Heart right ventricle (tissue), 16 donors: ENCODE measurements at regions of chrX and their contacts with region 1.

Region 1: GRCh38 chrX:106397801-106398538 is 213.8 kb upstream of the RADX start:
- DNase-seq: no peak
- ATAC-seq: no peak
- H3K4me3 ChIP-seq: no peak overlapping the region
- H3K27ac ChIP-seq: no peak overlapping the region
- H3K4me1 ChIP-seq: no peaks in the 10 kb centered on the region
- H3K27me3 ChIP-seq: peaks cover 0 to 18% (median 0%) of the 10 kb centered on the region in 7 donors
- CTCF ChIP-seq: peak in 6 of 9 donors; percentile 13 to 36 (median 18)

Region 2: GRCh38 chrX:105975382-105975781 is 422.6 kb before region 1 on chrX:
- intact Hi-C with region 1: loop called in 2 of 10 experiments (anchors 10 kb)
- DNase-seq: no peak
- ATAC-seq: no peak
- H3K4me3 ChIP-seq: no peak overlapping the region
- H3K27ac ChIP-seq: no peak overlapping the region
- H3K4me1 ChIP-seq: no peaks in the 10 kb centered on the region
- H3K27me3 ChIP-seq: peaks cover 0 to 22% (median 0%) of the 10 kb centered on the region in 7 donors
- CTCF ChIP-seq: peak in 7 of 9 donors; percentile 14 to 45 (median 27)

Region 3: GRCh38 chrX:106144755-106145639 is 253.0 kb before region 1 on chrX:
- intact Hi-C with region 1: no loop called
- DNase-seq: peak; percentile 45 to 50
- ATAC-seq: peak; percentile 58 to 95 (median 80)
- H3K4me3 ChIP-seq: no peak overlapping the region
- H3K27ac ChIP-seq: peak overlapping the region in 3 of 10 donors; percentile 22 to 31 (median 30)
- H3K4me1 ChIP-seq: peaks cover 0 to 3% (median 0%) of the 10 kb centered on the region in 9 donors
- H3K27me3 ChIP-seq: peaks cover 0 to 6% (median 0%) of the 10 kb centered on the region in 7 donors
- CTCF ChIP-seq: no peak

Region 4: DNA sequence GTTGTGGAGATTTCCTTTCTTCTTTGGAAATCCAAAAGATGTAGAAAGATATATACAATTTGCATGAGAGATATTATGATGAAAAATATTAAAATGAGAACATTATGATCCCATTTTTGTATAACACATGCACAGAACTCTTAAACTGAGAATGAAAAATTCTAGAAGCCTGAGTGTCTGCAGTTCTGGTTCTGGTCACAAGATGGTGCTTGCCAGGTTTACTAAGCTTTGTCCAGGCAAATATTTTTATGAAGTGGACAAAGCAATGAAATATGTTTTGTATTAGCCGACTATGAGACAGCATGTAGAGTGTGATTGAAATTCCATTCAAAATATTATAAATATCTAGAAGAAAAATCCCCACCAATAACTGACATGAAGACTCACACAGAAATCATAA is 227.7 kb before region 1 on chrX:
- intact Hi-C with region 1: loop called in 2 of 10 experiments (anchors 5 to 10 kb)
- DNase-seq: no peak
- ATAC-seq: no peak
- H3K4me3 ChIP-seq: no peak overlapping the region
- H3K27ac ChIP-seq: no peak overlapping the region
- H3K4me1 ChIP-seq: no peaks in the 10 kb centered on the region
- H3K27me3 ChIP-seq: peaks cover 0 to 28% (median 0%) of the 10 kb centered on the region in 7 donors
- CTCF ChIP-seq: peak in 7 of 9 donors; percentile 38 to 59 (median 53)

Region 5: GRCh38 chrX:106284376-106285025 is 113.5 kb before region 1 on chrX:
- intact Hi-C with region 1: no loop called
- DNase-seq: no peak
- ATAC-seq: no peak
- H3K4me3 ChIP-seq: no peak overlapping the region
- H3K27ac ChIP-seq: no peak overlapping the region
- H3K4me1 ChIP-seq: no peaks in the 10 kb centered on the region
- H3K27me3 ChIP-seq: peaks cover 0 to 25% (median 0%) of the 10 kb centered on the region in 7 donors
- CTCF ChIP-seq: no peak

Region 6: GRCh38 chrX:106564986-106565385 is 167.0 kb after region 1 on chrX:
- intact Hi-C with region 1: no loop called
- DNase-seq: no peak
- ATAC-seq: no peak
- H3K4me3 ChIP-seq: no peak overlapping the region
- H3K27ac ChIP-seq: no peak overlapping the region
- H3K4me1 ChIP-seq: no peaks in the 10 kb centered on the region
- H3K27me3 ChIP-seq: peaks cover 0 to 29% (median 0%) of the 10 kb centered on the region in 7 donors
- CTCF ChIP-seq: no peak